Right cardiac atrium (tissue), 5 donors: ENCODE measurements at regions of chr7 and their contacts with region 1.

Region 1: GRCh38 chr7:137081321-137082093 is 213.1 kb downstream of the CHRM2 start:
- DNase-seq: peak; percentile 84 to 93 (median 87)
- ATAC-seq: peak; percentile 94 to 98
- H3K4me3 ChIP-seq: no peak overlapping the region
- H3K27ac ChIP-seq: no peak overlapping the region
- H3K4me1 ChIP-seq: no peaks in the 10 kb centered on the region
- H3K27me3 ChIP-seq: no peaks in the 10 kb centered on the region

Region 2: DNA sequence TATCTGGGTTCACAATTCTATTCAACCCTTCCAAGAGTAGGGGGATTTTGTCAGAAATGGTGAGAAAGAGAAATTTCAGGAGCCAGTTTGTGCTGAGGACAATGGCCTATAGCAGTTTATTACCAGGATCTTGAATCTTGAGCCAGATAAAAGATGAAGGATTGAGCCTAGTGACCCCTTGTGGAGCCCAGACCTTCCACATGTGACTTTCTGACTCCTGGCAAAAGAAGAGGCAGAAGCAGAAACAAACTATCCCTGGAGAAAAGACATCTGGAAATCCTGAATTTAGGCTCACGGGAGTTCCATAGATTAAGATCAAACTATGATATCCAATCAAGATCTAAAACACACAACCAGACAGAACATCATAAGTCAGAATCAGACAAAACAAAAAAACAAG is 273.9 kb before region 1 on chr7:
- intact Hi-C with region 1: no loop called
- DNase-seq: no peak
- ATAC-seq: no peak
- H3K4me3 ChIP-seq: no peak overlapping the region
- H3K27ac ChIP-seq: no peak overlapping the region
- H3K4me1 ChIP-seq: no peaks in the 10 kb centered on the region
- H3K27me3 ChIP-seq: no peaks in the 10 kb centered on the region

Region 3: DNA sequence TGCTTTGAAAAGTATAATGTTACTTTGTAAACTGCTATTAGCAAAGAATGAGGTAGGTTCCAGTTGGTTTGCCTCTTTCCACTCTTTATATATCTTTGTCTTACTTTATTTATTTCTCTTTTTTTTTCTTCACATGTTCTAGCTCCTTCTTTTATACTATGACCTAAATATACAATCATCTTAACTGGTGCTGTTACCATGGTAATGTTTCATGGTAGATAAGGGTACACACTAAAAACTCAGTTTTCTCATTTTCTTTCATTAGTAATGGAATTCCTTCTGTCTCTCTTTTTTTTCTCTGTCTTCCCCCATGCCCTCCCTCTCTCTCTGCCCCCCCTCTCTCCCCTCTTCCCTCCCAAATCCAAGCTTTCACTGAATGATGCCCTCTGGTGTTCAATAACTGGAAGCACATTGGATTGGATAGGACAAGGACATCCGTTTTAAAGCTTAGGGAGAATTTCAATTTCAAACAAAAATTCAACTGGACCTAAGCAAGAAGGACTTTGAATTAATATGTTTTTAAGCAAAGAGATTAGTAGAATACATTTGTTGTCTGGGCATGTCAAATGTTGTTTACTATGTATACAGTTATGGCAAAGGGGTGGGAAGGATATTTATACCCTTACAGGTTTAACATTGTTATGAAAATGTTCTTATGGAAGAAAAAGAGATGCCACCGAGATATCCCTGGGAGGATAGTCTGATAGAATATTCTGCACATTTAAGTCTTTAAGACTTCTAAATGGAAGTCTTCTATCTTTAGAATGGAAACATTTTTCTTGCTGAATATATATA is 207.1 kb before region 1 on chr7:
- intact Hi-C with region 1: loop called in 1 of 4 experiments (anchors 10 kb)
- DNase-seq: no peak
- ATAC-seq: no peak
- H3K4me3 ChIP-seq: no peak overlapping the region
- H3K27ac ChIP-seq: no peak overlapping the region
- H3K4me1 ChIP-seq: no peaks in the 10 kb centered on the region
- H3K27me3 ChIP-seq: no peaks in the 10 kb centered on the region

Region 4: DNA sequence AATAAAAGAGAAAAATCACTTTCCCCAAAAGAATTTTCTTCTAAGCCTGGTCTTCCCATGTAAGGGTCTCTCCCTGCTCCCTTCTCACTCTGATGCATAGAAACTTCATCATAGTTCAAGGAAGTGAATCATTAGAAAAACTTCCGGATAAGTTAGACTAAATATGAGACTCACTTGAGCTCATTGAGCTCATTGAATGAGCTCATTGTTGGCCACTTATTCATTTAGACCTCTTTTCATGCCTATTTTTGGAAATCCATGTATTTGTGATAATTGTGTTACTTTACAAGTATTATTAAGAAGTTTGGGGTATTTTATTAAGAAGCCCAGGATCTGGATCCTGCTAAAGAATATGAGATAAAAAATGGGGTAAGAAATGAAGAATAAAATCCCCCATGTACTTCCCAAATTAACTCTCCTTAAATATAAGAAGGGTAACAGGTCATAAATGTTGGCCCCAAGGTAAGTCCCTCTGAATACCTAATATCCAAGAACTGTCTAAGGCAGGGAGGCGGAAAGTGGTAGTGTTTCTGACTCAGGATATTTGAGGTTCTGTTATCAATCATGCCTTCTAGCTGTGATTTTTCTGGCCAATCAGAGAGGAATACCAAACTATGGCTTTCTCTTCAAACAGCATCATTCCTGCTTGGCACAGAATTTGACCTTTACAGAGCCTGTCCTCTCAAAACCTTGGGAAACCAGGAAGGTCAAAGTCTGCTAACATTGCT is 498.6 kb after region 1 on chr7:
- intact Hi-C with region 1: no loop called
- DNase-seq: no peak
- ATAC-seq: peak in 1 of 2 donors; percentile 89
- H3K4me3 ChIP-seq: no peak overlapping the region
- H3K27ac ChIP-seq: no peak overlapping the region
- H3K4me1 ChIP-seq: no peaks in the 10 kb centered on the region
- H3K27me3 ChIP-seq: no peaks in the 10 kb centered on the region